ENCODE measurements at regions of chr7 and their contacts with region 1.

Region 1: GRCh38 chr7:26667500-26668133 is 196.8 kb downstream of the SKAP2 start:
- DNase-seq: peak in 1 of 2 donors; percentile 59
- H3K4me3 ChIP-seq: no peak overlapping the region
- H3K27ac ChIP-seq: no peak overlapping the region
- H3K4me1 ChIP-seq: no peaks in the 10 kb centered on the region
- H3K27me3 ChIP-seq: no peaks in the 10 kb centered on the region
- CTCF ChIP-seq: peak; percentile 62 to 64

Region 2: GRCh38 chr7:26376175-26376917 is 291.3 kb before region 1 on chr7:
- intact Hi-C with region 1: loop called (anchors 5 kb)
- DNase-seq: no peak
- H3K4me3 ChIP-seq: peak overlapping the region; percentile 28 to 35
- H3K27ac ChIP-seq: no peak overlapping the region
- H3K4me1 ChIP-seq: peaks cover 0 to 12% (median 9%) of the 10 kb centered on the region in 4 donors
- H3K27me3 ChIP-seq: peaks cover 3 to 92% of the 10 kb centered on the region in 2 donors
- CTCF ChIP-seq: no peak

Measured in tibial artery (tissue), 4 donors.